H1 (cell line): ENCODE measurements at regions of chr3 and their contacts with region 1.

Region 1: GRCh38 chr3:187319699-187320302 is 28.3 kb upstream of the MASP1 start:
- DNase-seq: peak; percentile 72 to 94
- H3K4me3 ChIP-seq: no peak overlapping the region
- H3K27ac ChIP-seq: no peak overlapping the region
- H3K4me1 ChIP-seq: peaks cover 0 to 4% (median 2%) of the 10 kb centered on the region in 4 experiments; a peak in 4 of 7 replicates
- H3K27me3 ChIP-seq: no peaks in the 10 kb centered on the region; a peak in 1 of 7 replicates
- CTCF ChIP-seq: peak; percentile 76 to 97 (median 95)
- EP300 ChIP-seq: no peak
- POLR2A ChIP-seq: no peak
- RAD21 ChIP-seq: peak; percentile 99 to 100

Region 2: GRCh38 chr3:186783073-186783730 is 536.6 kb before region 1 on chr3 and contains the start of gene EIF4A2:
- CTCF ChIA-PET with region 1: no interaction called
- POLR2A ChIA-PET with region 1: no interaction called
- DNase-seq: peak; percentile 51 to 93
- H3K4me3 ChIP-seq: peak within 1 kb of the TSS; percentile 98 to 100 (median 99)
- H3K27ac ChIP-seq: peak within 1 kb of the TSS; percentile 98
- H3K4me1 ChIP-seq: peaks cover 0 to 3% (median 1%) of the 10 kb centered on the region in 4 experiments; a peak in 2 of 7 replicates
- H3K27me3 ChIP-seq: no peaks in the 10 kb centered on the region
- CTCF ChIP-seq: no peak
- EP300 ChIP-seq: peak; percentile 22 to 57; a peak in 2 of 3 replicates
- POLR2A ChIP-seq: peak; percentile 98 to 100
- RAD21 ChIP-seq: 0 out of 4 replicates have a peak, but pooled peaks of 1 of the 2 experiments have one; percentile 5
- total RNA-seq, gene EIF4A2: 596 and 604 TPM in 2 replicates

Region 3: GRCh38 chr3:187255314-187255713 is 64.5 kb before region 1 on chr3:
- CTCF ChIA-PET with region 1: interaction called, 63 read pairs
- POLR2A ChIA-PET with region 1: no interaction called
- DNase-seq: no peak
- H3K4me3 ChIP-seq: no peak overlapping the region
- H3K27ac ChIP-seq: no peak overlapping the region
- H3K4me1 ChIP-seq: peaks cover 0 to 3% (median 0%) of the 10 kb centered on the region in 4 experiments; a peak in 1 of 7 replicates
- H3K27me3 ChIP-seq: no peaks in the 10 kb centered on the region
- CTCF ChIP-seq: no peak
- EP300 ChIP-seq: no peak
- POLR2A ChIP-seq: no peak
- RAD21 ChIP-seq: no peak

Region 4: DNA sequence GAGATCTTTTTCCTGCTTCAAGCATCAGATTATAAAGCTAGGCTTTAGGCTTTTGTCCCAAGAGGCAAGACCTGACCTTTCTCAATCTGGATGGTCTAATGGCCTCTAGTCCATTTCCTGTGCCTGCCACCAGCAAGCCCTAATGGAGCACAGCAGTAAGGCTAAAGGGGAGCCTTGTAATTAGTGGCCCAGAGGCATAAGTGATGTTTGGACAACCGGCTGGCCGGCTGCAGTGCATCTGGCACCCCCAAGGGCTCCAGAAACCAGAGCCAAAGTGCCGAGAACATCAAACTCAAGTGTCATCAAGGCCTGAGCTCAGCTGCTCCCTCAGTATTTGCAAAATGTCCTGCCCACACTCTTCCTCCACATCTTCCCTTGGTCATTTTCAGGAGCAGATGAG is 16.5 kb after region 1 on chr3:
- CTCF ChIA-PET with region 1: interaction called, 132 read pairs
- POLR2A ChIA-PET with region 1: no interaction called
- DNase-seq: no peak
- H3K4me3 ChIP-seq: no peak overlapping the region
- H3K27ac ChIP-seq: no peak overlapping the region
- H3K4me1 ChIP-seq: no peaks in the 10 kb centered on the region; a peak in 1 of 7 replicates
- H3K27me3 ChIP-seq: no peaks in the 10 kb centered on the region
- CTCF ChIP-seq: no peak
- EP300 ChIP-seq: no peak
- POLR2A ChIP-seq: no peak
- RAD21 ChIP-seq: no peak

Region 5: DNA sequence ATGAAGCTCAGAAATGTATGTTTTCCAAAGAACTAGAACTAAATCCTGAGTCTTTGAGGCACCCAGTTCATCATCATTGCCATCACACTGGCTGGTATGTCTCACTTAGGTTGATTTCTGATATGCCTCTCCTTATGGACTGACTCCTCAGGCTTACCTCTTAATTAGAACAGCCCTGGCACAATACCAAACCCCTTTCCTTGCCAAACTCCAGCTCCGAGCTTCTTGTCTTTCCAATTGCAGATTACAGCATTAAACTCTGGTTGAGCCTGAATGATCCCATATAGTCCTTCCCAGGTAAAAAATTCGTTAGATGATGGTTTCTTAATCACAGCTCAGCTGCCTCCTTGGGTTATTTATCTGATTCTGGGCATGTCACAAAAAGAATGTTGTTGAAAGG is 114.7 kb after region 1 on chr3:
- CTCF ChIA-PET with region 1: interaction called, 12 read pairs
- POLR2A ChIA-PET with region 1: no interaction called
- DNase-seq: no peak
- H3K4me3 ChIP-seq: no peak overlapping the region
- H3K27ac ChIP-seq: no peak overlapping the region
- H3K4me1 ChIP-seq: no peaks in the 10 kb centered on the region; a peak in 1 of 7 replicates
- H3K27me3 ChIP-seq: no peaks in the 10 kb centered on the region; a peak in 1 of 7 replicates
- CTCF ChIP-seq: no peak
- EP300 ChIP-seq: no peak
- POLR2A ChIP-seq: no peak
- RAD21 ChIP-seq: no peak

Region 6: GRCh38 chr3:187567661-187568121 is 247.9 kb after region 1 on chr3:
- CTCF ChIA-PET with region 1: interaction called, 34 read pairs
- POLR2A ChIA-PET with region 1: no interaction called
- DNase-seq: no peak
- H3K4me3 ChIP-seq: no peak overlapping the region
- H3K27ac ChIP-seq: no peak overlapping the region
- H3K4me1 ChIP-seq: peaks cover 0 to 13% (median 7%) of the 10 kb centered on the region in 4 experiments; a peak in 6 of 7 replicates
- H3K27me3 ChIP-seq: no peaks in the 10 kb centered on the region
- CTCF ChIP-seq: no peak
- EP300 ChIP-seq: no peak
- POLR2A ChIP-seq: no peak
- RAD21 ChIP-seq: no peak

Region 7: GRCh38 chr3:187679638-187680396 is 360.0 kb after region 1 on chr3:
- CTCF ChIA-PET with region 1: interaction called, 947 read pairs
- POLR2A ChIA-PET with region 1: interaction called, 19 read pairs
- DNase-seq: peak; percentile 63 to 96
- H3K4me3 ChIP-seq: no peak overlapping the region
- H3K27ac ChIP-seq: no peak overlapping the region
- H3K4me1 ChIP-seq: no peaks in the 10 kb centered on the region; a peak in 1 of 7 replicates
- H3K27me3 ChIP-seq: peaks cover 0 to 3% (median 0%) of the 10 kb centered on the region in 4 experiments; a peak in 1 of 7 replicates
- CTCF ChIP-seq: peak; percentile 86 to 98 (median 96)
- EP300 ChIP-seq: no peak
- POLR2A ChIP-seq: no peak
- RAD21 ChIP-seq: peak; percentile 99